ENCODE measurements at regions of chr10 and their contacts with region 1.

Region 1: DNA sequence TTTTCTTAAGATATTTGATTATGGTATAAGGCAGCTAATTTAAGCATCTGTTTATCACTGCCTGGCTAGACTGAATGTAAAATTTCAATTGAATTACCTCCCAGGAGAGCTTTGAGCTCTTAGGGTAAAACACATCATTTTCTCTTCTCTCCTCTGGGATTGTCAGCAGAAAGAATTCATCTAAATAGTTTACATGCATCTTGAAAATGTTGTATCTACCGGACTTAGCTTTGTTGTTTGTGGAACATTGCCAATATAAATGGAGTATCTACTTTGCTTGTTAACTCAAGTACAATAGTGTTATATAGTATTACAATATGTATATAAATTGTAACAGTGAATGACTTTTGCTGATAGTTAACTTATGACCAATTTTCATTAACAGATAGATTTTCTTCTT is 73.3 kb downstream of the TAF3 start:
- DNase-seq: no peak
- H3K4me3 Mint-ChIP-seq: no peak overlapping the region
- H3K27ac Mint-ChIP-seq: no peak overlapping the region
- H3K4me1 Mint-ChIP-seq: peaks cover 19% of the 10 kb centered on the region
- H3K27me3 Mint-ChIP-seq: no peaks in the 10 kb centered on the region
- CTCF ChIP-seq: no peak

Region 2: DNA sequence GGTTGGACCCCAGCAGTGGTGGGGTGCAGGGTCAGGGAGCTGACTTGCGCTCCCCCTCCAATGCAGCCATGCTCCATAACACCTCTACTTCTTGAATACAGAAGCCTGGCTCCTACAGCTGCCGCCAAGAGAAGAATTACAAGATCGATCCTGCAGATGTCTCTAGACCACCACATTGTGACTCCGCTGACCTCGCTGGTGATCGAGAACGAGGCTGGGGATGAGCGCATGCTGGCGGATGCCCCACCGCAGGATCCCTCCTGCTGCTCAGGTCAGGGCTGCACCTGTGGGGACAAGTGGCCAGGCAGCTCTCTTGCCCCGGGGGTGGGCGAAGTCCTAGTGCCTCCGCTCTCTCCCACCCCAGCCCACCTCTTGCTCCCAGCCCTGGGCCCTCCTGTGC is 156.8 kb before region 1 on chr10:
- CTCF ChIA-PET with region 1: no interaction called
- intact Hi-C with region 1: no loop called
- DNase-seq: no peak
- H3K4me3 Mint-ChIP-seq: no peak overlapping the region
- H3K27ac Mint-ChIP-seq: no peak overlapping the region
- H3K4me1 Mint-ChIP-seq: no peaks in the 10 kb centered on the region
- H3K27me3 Mint-ChIP-seq: no peaks in the 10 kb centered on the region
- CTCF ChIP-seq: no peak

Region 3: DNA sequence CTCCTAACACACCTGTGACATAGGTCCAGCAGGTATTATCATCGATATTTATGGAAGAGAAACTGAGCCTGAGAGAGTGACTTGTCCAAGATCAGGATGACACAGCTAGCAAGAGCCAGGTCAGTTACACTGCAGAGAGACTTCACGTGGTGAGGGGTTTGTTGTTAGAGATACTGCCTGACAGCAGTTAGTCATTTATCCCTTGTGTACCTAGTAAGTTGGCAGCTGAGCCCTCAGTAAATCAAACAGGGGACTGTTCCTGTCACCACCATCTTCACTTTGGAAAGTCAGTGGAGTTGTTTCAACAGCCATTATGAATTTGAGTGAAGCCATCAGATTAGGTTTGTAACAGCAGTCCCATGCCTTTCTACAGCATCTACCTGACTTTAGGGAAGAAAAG is 75.4 kb after region 1 on chr10:
- CTCF ChIA-PET with region 1: no interaction called
- intact Hi-C with region 1: no loop called
- DNase-seq: no peak
- H3K4me3 Mint-ChIP-seq: no peak overlapping the region
- H3K27ac Mint-ChIP-seq: no peak overlapping the region
- H3K4me1 Mint-ChIP-seq: peaks cover 8% of the 10 kb centered on the region
- H3K27me3 Mint-ChIP-seq: no peaks in the 10 kb centered on the region
- CTCF ChIP-seq: no peak

Region 4: DNA sequence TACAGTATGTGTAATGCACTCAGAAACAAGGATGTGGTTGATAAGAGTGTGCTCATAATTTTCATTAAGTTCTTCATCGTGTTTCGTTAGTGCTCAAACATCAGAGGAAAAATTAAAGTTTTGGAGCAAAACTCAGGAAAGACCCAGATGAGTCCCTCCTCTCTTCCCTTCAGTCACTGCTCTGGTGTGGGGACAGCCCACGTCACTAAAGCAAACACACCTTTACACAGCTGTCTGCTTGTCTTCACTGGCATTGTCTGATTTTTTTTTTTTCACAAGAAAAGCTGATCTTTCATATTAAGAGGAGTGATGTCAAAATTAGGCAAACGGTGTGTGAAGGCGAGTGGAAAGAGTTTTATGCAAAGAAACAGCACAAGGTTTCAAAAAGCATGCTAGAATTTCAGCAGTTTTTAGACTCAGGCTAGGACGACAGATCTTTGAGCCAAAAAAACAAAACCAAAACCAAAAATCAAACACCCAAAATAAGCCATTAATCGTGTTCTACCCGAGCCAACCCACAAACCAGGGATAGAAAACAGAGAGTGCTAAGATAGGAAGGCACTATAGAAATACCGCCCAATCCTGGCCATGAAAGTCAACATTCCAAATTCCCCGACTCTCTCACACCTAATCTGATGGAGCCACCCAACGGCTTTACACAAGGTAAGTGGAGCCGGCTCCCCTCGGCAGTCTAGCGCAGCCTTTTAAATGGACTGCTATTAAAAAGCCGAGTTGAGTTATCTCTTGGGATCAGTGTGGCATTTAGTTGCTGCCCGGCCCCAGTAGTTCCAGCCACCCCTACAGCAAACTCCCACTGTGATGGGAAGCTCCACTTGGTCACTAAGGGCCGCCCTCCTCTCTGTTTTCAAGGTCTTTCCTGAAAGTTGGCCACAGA is 135.0 kb after region 1 on chr10:
- CTCF ChIA-PET with region 1: interaction called, 11 read pairs
- intact Hi-C with region 1: no loop called
- DNase-seq: no peak
- H3K4me3 Mint-ChIP-seq: peak overlapping the region; percentile 48
- H3K27ac Mint-ChIP-seq: no peak overlapping the region
- H3K4me1 Mint-ChIP-seq: no peaks in the 10 kb centered on the region
- H3K27me3 Mint-ChIP-seq: peaks cover 7% of the 10 kb centered on the region
- CTCF ChIP-seq: no peak